PC-9 (cell line): ENCODE measurements at regions of chr7 and their contacts with region 1.

Region 1: GRCh38 chr7:82481499-82482097 is 38.0 kb upstream of the CACNA2D1 start:
- DNase-seq: no peak
- H3K4me3 ChIP-seq: no peak overlapping the region
- H3K27ac ChIP-seq: no peak overlapping the region
- H3K4me1 ChIP-seq: no peaks in the 10 kb centered on the region
- H3K27me3 ChIP-seq: no peaks in the 10 kb centered on the region
- CTCF ChIP-seq: peak; percentile 88

Region 2: DNA sequence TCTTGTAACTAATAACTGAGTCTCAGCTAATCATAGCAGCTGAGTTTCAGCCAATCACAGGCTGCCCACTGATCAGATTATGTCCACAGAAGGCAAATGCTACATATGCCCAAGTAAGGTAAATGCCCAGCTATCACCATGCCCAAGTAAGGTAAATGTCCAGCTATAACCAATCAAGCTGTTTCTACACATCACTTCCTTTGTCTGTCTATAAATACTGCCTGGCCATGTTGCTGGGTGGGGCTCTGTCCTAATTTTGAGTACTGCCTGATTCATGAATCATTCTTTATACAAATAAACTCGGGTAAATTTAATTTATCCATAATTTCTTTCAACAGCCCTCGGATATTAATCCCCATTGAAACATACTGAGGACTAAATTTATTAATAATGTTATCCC is 350.4 kb before region 1 on chr7:
- CTCF ChIA-PET with region 1: no interaction called
- POLR2A ChIA-PET with region 1: no interaction called
- intact Hi-C with region 1: no loop called
- DNase-seq: no peak
- H3K4me3 ChIP-seq: no peak overlapping the region
- H3K27ac ChIP-seq: no peak overlapping the region
- H3K4me1 ChIP-seq: no peaks in the 10 kb centered on the region
- H3K27me3 ChIP-seq: no peaks in the 10 kb centered on the region
- CTCF ChIP-seq: no peak

Region 3: GRCh38 chr7:82241356-82241755 is 240.2 kb before region 1 on chr7:
- CTCF ChIA-PET with region 1: no interaction called
- POLR2A ChIA-PET with region 1: no interaction called
- intact Hi-C with region 1: loop called (anchors 5 kb)
- DNase-seq: no peak
- H3K4me3 ChIP-seq: no peak overlapping the region
- H3K27ac ChIP-seq: no peak overlapping the region
- H3K4me1 ChIP-seq: no peaks in the 10 kb centered on the region
- H3K27me3 ChIP-seq: no peaks in the 10 kb centered on the region
- CTCF ChIP-seq: no peak

Region 4: GRCh38 chr7:82506702-82507101 is 25.1 kb after region 1 on chr7:
- CTCF ChIA-PET with region 1: no interaction called
- POLR2A ChIA-PET with region 1: no interaction called
- intact Hi-C with region 1: no loop called
- DNase-seq: no peak
- H3K4me3 ChIP-seq: no peak overlapping the region
- H3K27ac ChIP-seq: no peak overlapping the region
- H3K4me1 ChIP-seq: 0 out of 2 replicates have a peak, but pooled peaks cover 7% of the 10 kb centered on the region
- H3K27me3 ChIP-seq: no peaks in the 10 kb centered on the region
- CTCF ChIP-seq: no peak